Activated CD8-positive, alpha-beta T cell treated with anti-CD3 and anti-CD28 coated beads for 36 hours (primary cell): ENCODE measurements at regions of chr1 and their contacts with region 1.

Region 1: GRCh38 chr1:39653546-39654031 is 14.1 kb upstream of the HEYL start:
- DNase-seq: peak; percentile 92
- ATAC-seq: peak; percentile 79
- H3K4me3 Mint-ChIP-seq: no peak overlapping the region
- H3K27ac Mint-ChIP-seq: no peak overlapping the region
- H3K4me1 Mint-ChIP-seq: peaks cover 11% of the 10 kb centered on the region
- H3K27me3 Mint-ChIP-seq: peaks cover 8% of the 10 kb centered on the region
- CTCF ChIP-seq: peak; percentile 76

Region 2: GRCh38 chr1:39378377-39378776 is 275.2 kb before region 1 on chr1:
- CTCF ChIA-PET with region 1: no interaction called
- POLR2A ChIA-PET with region 1: no interaction called
- intact Hi-C with region 1: no loop called
- DNase-seq: no peak
- ATAC-seq: no peak
- H3K4me3 Mint-ChIP-seq: no peak overlapping the region
- H3K27ac Mint-ChIP-seq: no peak overlapping the region
- H3K4me1 Mint-ChIP-seq: no peaks in the 10 kb centered on the region
- H3K27me3 Mint-ChIP-seq: no peaks in the 10 kb centered on the region
- CTCF ChIP-seq: peak; percentile 19

Region 3: DNA sequence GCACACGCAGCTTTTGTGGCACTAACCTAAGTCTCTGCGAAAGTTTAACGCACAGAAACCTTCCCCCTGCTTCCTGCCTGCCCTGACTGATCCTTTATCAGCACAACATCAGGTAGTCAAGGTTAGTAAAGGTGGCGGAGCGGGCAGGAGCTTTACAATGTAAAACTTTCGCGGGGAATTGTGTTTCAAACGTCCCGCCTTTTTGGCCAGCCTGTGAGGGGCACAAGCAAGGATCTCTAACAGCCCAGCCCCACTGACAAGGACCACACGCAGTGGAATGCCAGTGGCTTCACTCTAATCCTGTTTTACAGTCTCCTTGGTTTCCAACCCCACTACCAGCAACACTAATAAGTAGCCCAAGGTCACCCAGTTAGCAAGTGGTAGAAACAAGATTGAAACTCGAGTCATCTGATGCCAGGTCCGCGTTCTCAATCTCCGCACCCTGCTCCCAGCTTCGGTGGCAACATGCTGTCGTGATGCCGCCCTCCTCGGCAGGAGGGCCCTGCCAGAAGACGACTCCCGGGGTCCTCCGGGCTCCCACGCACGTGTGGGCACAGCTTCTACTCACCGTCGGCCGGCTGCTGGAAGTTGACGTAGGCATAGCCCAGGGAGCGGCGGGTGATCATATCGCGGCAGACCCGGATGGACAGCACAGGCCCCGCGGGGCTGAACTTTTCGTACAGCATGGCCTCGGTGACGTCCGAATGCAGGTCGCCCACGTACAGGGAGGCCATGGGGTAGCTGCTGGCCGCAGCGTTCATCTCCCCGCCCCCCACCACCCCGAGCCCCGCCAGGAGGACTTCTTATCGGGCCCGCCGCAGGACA is 78.2 kb before region 1 on chr1:
- CTCF ChIA-PET with region 1: interaction called, 16 read pairs
- POLR2A ChIA-PET with region 1: interaction called, 4 read pairs
- intact Hi-C with region 1: no loop called
- DNase-seq: peak; percentile 74
- ATAC-seq: peak; percentile 42
- H3K4me3 Mint-ChIP-seq: peak overlapping the region; percentile 86
- H3K27ac Mint-ChIP-seq: peak overlapping the region; percentile 91
- H3K4me1 Mint-ChIP-seq: peaks cover 42% of the 10 kb centered on the region
- H3K27me3 Mint-ChIP-seq: no peaks in the 10 kb centered on the region
- CTCF ChIP-seq: no peak

Region 4: DNA sequence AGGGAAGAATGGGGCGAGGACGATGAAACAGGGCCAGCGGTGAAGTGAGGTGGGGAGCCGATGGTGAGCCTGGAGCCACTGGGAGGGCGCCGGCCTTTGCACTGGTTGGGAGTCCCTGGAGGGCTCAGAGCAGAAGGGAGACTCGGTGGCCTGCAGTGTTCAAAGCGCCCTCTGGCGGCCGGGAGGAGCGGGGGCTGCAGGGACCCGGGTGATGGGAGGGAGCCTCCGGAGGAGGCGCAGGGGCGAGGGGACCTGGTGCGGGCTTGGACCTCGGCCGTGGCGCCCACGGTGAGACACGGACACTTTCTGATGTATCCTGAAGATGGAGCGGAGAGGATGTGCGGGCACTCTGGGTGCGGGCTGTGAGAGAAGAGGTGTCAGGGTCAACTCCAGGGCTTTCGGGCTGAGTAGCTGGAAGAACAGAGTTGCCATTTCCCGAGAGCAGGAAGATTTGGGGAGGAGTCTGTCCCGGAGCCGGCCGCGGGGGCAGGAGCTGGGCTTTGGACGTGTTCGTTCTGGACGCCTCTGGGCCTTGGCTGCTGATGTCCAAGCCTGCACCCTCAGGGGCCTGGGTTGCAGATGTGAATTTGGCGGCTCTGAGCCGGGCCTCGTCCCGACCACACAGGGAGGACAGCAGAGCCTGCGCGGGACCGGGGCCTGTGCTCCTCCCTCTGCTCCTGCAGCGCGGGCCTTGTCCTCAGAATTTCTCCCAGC is 43.8 kb before region 1 on chr1:
- CTCF ChIA-PET with region 1: interaction called, 329 read pairs
- POLR2A ChIA-PET with region 1: interaction called, 4 read pairs
- intact Hi-C with region 1: loop called (anchors 1 kb)
- DNase-seq: peak; percentile 81
- ATAC-seq: peak; percentile 91
- H3K4me3 Mint-ChIP-seq: no peak overlapping the region
- H3K27ac Mint-ChIP-seq: no peak overlapping the region
- H3K4me1 Mint-ChIP-seq: no peaks in the 10 kb centered on the region
- H3K27me3 Mint-ChIP-seq: peaks cover 9% of the 10 kb centered on the region
- CTCF ChIP-seq: peak; percentile 78

Region 5: GRCh38 chr1:39639305-39640130 is 14.1 kb before region 1 on chr1 and contains the start of gene HEYL:
- CTCF ChIA-PET with region 1: interaction called, 42 read pairs
- POLR2A ChIA-PET with region 1: interaction called, 3 read pairs
- intact Hi-C with region 1: no loop called
- DNase-seq: peak; percentile 72
- ATAC-seq: peak; percentile 96
- H3K4me3 Mint-ChIP-seq: peak within 1 kb of the TSS; percentile 48
- H3K27ac Mint-ChIP-seq: no peak within 1 kb of the TSS
- H3K4me1 Mint-ChIP-seq: peaks cover 6% of the 10 kb centered on the region
- H3K27me3 Mint-ChIP-seq: peaks cover 37% of the 10 kb centered on the region
- CTCF ChIP-seq: no peak
- total RNA-seq, gene HEYL: 0.07 TPM in 1 of 2 experiments, not detected in the other

Region 6: DNA sequence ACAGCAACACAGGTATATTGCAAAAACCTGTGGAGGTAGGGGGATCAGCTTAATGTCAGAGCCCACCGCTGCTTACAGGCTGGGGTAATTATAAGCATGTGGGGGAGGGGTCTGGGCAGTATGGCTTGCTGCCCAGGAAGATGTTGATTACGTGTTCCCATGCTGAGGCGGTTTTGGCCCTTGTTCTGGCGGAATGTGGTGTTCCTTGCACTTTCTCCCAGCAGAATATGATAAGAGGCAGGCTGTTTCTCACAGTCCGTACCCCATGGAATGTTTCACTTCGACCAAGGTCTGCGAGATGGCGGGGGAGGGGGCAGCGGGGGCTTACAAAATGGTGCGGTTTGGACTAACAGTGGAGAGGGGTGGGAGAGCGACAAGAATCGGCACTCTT is 47.5 kb after region 1 on chr1:
- CTCF ChIA-PET with region 1: interaction called, 23 read pairs
- POLR2A ChIA-PET with region 1: no interaction called
- intact Hi-C with region 1: no loop called
- DNase-seq: no peak
- ATAC-seq: no peak
- H3K4me3 Mint-ChIP-seq: no peak overlapping the region
- H3K27ac Mint-ChIP-seq: no peak overlapping the region
- H3K4me1 Mint-ChIP-seq: no peaks in the 10 kb centered on the region
- H3K27me3 Mint-ChIP-seq: peaks cover 14% of the 10 kb centered on the region
- CTCF ChIP-seq: no peak

Region 7: DNA sequence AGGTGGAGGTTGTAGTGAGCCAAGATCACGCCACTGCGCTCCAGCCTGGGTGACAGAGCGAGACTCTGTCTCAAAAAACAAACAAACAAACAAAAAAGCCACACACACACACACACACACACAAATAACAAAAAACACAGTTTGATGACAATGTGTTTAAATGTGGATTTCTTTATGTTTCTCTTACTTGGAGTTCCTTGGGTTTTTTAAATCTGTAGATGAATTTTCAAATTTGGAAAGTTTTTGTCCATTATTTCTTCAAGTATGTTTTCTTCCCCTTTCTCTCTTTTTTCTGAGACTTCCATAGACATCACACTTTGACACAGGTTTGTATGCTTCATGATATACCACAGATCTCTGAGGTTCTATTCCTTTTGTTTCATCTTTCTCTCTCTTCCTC is 73.0 kb after region 1 on chr1:
- CTCF ChIA-PET with region 1: interaction called, 40 read pairs
- POLR2A ChIA-PET with region 1: no interaction called
- intact Hi-C with region 1: no loop called
- DNase-seq: no peak
- ATAC-seq: no peak
- H3K4me3 Mint-ChIP-seq: no peak overlapping the region
- H3K27ac Mint-ChIP-seq: no peak overlapping the region
- H3K4me1 Mint-ChIP-seq: peaks cover 9% of the 10 kb centered on the region
- H3K27me3 Mint-ChIP-seq: peaks cover 58% of the 10 kb centered on the region
- CTCF ChIP-seq: no peak